Activated T-helper 1 cell treated with anti-CD3 and anti-CD28 coated beads, Interleukin-12 subunit alpha, Interleukin-12 subunit beta, Interleukin-2, Interleukin-4 antibody, amounts not matched to agents 30 ng/mL and 10 ng/mL and 1 ng/mL, durations not matched to agents 14 hours and 24 hours and 36 hours (primary cell): ENCODE measurements at regions of chr12 and their contacts with region 1.

Region 1: GRCh38 chr12:120710031-120710804 is at the start of gene UNC119B:
- DNase-seq: peak; percentile 71
- H3K4me3 Mint-ChIP-seq: peak within 1 kb of the TSS; percentile 91
- H3K27ac Mint-ChIP-seq: peak within 1 kb of the TSS; percentile 89
- H3K4me1 Mint-ChIP-seq: peaks cover 37% of the 10 kb centered on the region
- H3K27me3 Mint-ChIP-seq: no peaks in the 10 kb centered on the region
- total RNA-seq, gene UNC119B: 24.2 and 24.6 TPM in 2 replicates

Region 2: DNA sequence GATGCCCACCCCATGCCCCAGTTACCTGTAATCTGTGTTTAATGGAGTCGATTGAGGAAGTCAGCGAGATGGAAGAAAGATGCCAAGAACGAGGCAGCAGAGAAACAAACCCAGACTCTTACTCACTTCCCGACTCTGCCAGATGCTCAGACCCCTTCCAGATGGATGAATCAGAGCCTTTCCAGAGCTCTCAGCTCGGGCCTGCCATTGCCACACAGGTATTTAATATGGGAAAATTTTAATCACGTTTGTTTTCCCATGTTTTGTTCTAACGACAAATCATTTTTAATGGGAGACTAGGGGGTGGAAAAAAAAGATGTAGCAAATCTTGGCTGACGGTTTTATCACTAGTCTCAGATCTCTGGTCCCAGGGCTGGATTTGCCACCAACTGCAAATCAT is 1801.4 kb before region 1 on chr12:
- intact Hi-C with region 1: no loop called
- DNase-seq: no peak
- H3K4me3 Mint-ChIP-seq: no peak overlapping the region
- H3K27ac Mint-ChIP-seq: no peak overlapping the region
- H3K4me1 Mint-ChIP-seq: no peaks in the 10 kb centered on the region
- H3K27me3 Mint-ChIP-seq: no peaks in the 10 kb centered on the region

Region 3: DNA sequence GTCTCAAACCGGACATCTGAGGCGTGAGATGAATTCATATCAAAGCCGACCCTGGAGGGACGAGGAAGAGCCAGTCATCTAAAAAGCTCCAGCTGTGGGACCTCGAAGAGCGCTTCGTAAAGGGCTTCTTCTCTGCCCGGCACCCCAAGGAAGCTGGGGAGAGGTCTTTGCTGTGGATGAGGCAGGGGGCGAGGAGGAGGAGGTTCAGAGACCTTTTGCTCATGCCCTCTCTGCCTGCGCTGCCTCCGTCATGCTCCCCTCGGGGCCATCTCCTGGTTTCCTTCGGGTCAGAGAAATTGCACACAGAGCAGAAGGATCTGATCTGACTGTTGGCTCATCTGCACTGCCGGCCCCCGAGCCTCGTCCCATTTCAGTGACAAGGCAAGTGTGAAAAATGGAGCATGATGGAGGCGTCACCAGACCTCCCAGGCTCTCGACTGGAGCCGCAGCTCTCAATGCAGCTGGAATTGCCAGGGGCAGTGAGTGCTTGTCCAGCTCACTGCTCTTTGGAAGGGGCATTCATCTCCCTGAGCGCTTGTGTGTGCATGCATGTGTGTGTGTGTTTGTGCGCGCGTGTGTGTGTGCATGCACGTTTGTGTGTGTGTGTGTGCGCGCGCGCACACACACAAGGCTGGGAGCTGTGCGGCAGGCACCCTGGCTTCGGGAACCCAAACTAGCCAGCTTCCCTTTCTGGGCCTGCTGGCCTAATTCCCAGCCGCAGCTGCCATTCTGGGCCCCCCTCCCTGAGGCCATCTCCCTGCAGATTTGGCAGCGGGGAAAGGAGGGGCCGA is 60.6 kb before region 1 on chr12:
- intact Hi-C with region 1: loop called (anchors 1 kb)
- DNase-seq: no peak
- H3K4me3 Mint-ChIP-seq: no peak overlapping the region
- H3K27ac Mint-ChIP-seq: no peak overlapping the region
- H3K4me1 Mint-ChIP-seq: peaks cover 15% of the 10 kb centered on the region
- H3K27me3 Mint-ChIP-seq: peaks cover 54% of the 10 kb centered on the region

Region 4: GRCh38 chr12:120680165-120680738 is 30.0 kb before region 1 on chr12:
- intact Hi-C with region 1: no loop called
- DNase-seq: no peak
- H3K4me3 Mint-ChIP-seq: no peak overlapping the region
- H3K27ac Mint-ChIP-seq: no peak overlapping the region
- H3K4me1 Mint-ChIP-seq: peaks cover 21% of the 10 kb centered on the region
- H3K27me3 Mint-ChIP-seq: no peaks in the 10 kb centered on the region

Region 5: GRCh38 chr12:120725659-120726509 is 15.7 kb after region 1 on chr12 and contains the start of gene ACADS:
- intact Hi-C with region 1: loop called (anchors 1 kb)
- DNase-seq: peak; percentile 89
- H3K4me3 Mint-ChIP-seq: peak within 1 kb of the TSS; percentile 94
- H3K27ac Mint-ChIP-seq: peak within 1 kb of the TSS; percentile 87
- H3K4me1 Mint-ChIP-seq: peaks cover 22% of the 10 kb centered on the region
- H3K27me3 Mint-ChIP-seq: no peaks in the 10 kb centered on the region
- total RNA-seq, gene ACADS: 10.8 and 11.1 TPM in 2 replicates

Region 6: GRCh38 chr12:120783197-120783596 is 73.0 kb after region 1 on chr12:
- intact Hi-C with region 1: no loop called
- DNase-seq: no peak
- H3K4me3 Mint-ChIP-seq: no peak overlapping the region
- H3K27ac Mint-ChIP-seq: peak overlapping the region; percentile 15
- H3K4me1 Mint-ChIP-seq: peaks cover 15% of the 10 kb centered on the region
- H3K27me3 Mint-ChIP-seq: no peaks in the 10 kb centered on the region

Region 7: DNA sequence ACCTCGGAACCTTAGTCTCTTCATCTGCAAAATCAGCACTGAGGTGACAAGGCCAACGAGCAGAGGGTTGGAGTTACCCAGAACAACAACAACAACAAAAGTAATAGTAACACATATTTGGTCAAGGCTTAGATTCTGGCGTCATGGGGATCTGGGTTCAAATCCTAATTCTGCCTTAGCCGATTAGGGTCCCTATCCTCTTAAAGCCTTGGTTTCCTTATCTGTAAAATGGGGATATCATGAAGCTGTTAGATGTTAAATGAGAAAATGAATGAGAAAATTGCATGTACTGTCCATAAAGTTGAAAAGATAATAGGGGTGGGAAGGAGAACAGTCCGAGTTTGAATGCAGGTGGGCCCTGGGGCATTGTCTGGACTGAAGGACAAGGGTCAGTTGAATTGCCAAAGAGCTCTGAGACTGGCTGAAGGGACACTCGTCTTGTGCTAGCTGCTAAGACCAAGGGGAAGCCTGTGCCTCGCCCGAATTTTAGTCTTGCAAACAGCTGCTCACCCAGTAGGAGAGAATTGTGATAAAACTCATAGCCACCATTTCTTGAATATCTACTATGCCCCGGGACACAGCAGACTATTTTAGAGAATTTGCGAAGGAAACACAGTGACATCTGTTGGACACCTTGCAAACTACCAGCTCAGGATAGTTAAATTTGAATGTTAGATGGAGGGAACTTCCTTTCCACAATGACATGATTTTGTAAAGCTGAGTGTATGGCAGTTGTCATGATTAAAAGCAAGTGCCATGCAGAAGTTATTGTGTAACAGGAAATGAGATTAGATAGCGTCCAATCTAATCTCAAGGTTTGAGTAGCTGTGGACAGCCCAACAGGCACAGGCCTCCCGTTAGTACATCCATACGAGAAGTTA is 261.3 kb after region 1 on chr12:
- intact Hi-C with region 1: loop called (anchors 1 kb)
- DNase-seq: peak; percentile 17
- H3K4me3 Mint-ChIP-seq: no peak overlapping the region
- H3K27ac Mint-ChIP-seq: no peak overlapping the region
- H3K4me1 Mint-ChIP-seq: peaks cover 7% of the 10 kb centered on the region
- H3K27me3 Mint-ChIP-seq: peaks cover 8% of the 10 kb centered on the region

Region 8: DNA sequence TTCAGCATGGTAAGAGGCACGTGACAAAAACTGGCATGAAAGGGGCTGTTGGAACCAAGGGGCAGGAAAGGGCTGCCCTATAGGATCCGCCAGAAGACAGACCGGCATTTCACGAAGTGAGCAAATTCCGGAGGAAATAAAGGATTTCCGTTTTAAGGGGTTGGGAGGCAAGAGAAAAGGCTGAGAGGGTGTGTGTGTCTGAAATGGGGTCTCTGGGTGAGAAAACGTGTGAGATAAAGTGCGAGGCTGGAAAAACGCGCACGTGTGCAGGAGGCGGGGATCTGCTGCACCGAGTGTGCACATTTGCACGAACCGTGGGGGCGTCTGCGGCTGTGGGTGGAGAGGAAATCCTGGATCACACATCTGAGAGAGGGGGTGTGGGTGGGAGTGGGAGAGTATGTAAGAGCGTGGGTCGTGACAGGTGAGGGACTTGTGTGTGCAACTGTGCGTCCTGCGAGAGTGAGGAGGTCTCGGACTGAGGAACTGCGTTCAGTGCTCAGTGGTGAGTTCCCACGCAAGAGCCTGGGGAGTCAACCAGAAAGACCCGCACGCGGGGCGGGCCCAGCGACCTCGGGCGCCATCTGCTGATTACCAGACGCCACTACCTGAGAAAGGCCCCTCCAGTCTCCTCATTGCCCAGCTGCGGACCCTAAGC is 385.5 kb after region 1 on chr12:
- intact Hi-C with region 1: loop called (anchors 10 kb)
- DNase-seq: peak; percentile 74
- H3K4me3 Mint-ChIP-seq: peak overlapping the region; percentile 82
- H3K27ac Mint-ChIP-seq: peak overlapping the region; percentile 61
- H3K4me1 Mint-ChIP-seq: peaks cover 33% of the 10 kb centered on the region
- H3K27me3 Mint-ChIP-seq: peaks cover 4% of the 10 kb centered on the region